Prostate gland (tissue), 2 donors: ENCODE measurements at regions of chr21 and their contacts with region 1.

Region 1: DNA sequence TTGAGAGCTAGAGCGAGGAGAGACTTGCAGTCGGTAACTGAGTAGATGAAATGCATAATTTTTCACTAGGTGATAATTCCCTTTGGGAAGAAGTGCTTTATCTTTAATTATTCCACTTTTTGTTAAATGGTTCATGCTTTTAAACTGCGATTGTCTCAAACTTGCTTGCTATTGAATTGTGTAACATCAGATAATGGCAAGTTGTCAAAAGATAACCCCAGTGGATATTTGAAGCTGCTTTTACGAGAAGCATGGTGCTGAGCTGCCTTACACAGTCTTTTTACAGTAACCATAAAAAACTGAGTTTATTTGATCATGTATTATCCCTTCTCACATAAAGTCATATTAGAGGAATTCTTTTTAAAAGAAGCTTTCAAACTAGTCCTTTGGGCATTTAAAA is 30.2 kb downstream of the TMEM50B start:
- DNase-seq: no peak
- H3K4me3 ChIP-seq: no peak overlapping the region
- H3K27ac ChIP-seq: no peak overlapping the region
- H3K4me1 ChIP-seq: no peaks in the 10 kb centered on the region
- H3K27me3 ChIP-seq: no peaks in the 10 kb centered on the region
- CTCF ChIP-seq: no peak
- POLR2A ChIP-seq: no peak

Region 2: DNA sequence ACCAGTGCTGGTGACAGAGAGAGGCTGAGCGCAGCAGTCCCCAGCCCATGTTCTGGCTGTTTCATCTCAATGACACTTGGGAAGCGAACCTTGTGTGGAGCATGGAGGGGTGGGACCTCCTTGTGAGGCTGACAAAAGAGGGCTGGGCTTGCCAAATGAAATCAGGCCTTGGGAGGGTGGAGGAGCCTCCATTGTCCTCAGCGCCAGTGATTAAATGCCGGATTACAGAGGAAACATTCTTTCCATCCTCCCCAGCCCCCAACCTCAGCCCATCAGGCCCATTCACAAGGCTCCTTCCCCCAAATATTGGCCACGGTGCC is 614.7 kb before region 1 on chr21:
- intact Hi-C with region 1: loop called (anchors 5 kb)
- DNase-seq: no peak
- H3K4me3 ChIP-seq: no peak overlapping the region
- H3K27ac ChIP-seq: no peak overlapping the region
- H3K4me1 ChIP-seq: no peaks in the 10 kb centered on the region
- H3K27me3 ChIP-seq: no peaks in the 10 kb centered on the region
- CTCF ChIP-seq: no peak
- POLR2A ChIP-seq: no peak

Region 3: DNA sequence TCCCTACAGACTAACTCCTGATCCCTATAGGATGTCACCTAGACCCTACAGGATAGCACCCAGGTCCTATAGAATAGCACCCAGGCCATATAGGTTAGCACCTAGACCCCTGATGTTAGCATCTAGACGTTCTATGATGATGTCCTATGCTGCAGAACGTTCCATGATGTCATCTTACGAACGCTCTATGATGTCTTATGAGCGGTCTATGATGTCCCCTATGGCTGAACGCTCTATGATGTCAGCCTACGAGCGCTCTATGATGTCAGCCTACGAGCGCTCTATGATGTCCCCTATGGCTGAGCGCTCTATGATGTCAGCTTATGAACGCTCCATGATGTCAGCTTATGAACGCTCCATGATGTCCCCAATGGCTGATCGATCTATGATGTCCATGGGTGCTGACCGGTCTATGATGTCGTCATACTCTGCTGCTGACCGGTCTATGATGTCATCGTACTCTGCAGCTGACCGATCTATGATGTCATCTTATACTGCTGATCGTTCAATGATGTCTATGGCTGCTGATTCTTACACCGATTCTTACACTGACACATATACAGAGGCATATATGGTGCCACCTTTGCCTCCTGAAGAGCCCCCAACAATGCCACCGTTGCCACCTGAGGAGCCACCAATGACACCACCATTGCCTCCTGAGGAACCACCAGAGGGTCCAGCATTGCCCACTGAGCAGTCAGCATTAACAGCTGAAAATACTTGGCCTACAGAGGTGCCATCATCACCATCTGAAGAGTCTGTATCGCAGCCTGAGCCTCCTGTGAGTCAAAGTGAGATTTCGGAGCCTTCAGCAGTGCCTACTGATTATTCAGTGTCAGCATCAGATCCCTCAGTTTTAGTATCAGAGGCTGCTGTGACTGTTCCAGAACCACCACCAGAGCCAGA is 102.7 kb after region 1 on chr21:
- intact Hi-C with region 1: no loop called
- DNase-seq: no peak
- H3K4me3 ChIP-seq: no peak overlapping the region
- H3K27ac ChIP-seq: no peak overlapping the region
- H3K4me1 ChIP-seq: no peaks in the 10 kb centered on the region
- H3K27me3 ChIP-seq: no peaks in the 10 kb centered on the region
- CTCF ChIP-seq: no peak
- POLR2A ChIP-seq: no peak